Motor neuron (in vitro differentiated cells): ENCODE measurements at regions of chr1 and their contacts with region 1.

Region 1: DNA sequence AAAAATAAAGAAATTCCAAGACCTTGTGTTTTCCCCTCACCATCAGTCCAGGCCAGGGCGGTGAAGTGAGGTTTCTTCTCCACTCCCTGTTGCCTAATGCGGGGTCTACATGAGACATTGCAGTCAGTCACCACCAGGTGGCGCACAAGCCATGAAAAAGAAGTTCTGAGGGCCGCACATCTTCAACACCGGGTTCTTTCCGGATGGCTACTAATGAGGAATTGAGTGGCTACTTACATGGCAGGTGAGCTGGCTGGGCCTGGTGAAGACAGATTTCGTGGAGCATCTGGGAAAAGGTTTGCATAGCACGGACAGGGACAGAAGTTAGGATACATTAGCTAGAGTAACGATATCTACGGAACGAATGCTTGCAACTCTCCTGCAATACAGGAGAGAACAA is 15.8 kb upstream of the S100A11 start:
- ATAC-seq: peak in 3 of 8 experiments; percentile 2 to 11 (median 2)
- H3K4me3 ChIP-seq: no peak overlapping the region
- H3K27ac ChIP-seq: no peak overlapping the region
- H3K4me1 ChIP-seq: peaks cover 0 to 10% of the 10 kb centered on the region in 2 donors

Region 2: DNA sequence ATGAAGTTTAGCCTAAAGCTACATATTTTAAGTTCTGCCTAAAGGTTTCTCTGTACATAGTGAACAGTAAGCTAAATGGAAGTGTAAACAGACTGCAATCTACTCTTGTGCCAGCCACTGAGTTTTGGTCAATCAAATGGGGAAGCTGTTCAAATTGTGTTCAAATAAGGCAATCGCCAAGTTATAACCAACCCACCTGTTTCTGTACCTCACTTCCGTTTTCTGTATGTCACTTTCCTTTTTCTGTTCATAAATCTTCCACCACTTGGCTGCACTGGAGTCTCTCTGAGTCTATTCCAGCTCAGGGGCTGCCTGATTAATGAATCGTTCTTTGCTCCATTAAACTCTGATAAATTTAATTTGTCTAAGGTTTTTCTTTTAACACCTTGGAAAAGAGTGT is 132.5 kb before region 1 on chr1:
- in situ Hi-C with region 1: no loop called
- ATAC-seq: no peak
- H3K4me3 ChIP-seq: no peak overlapping the region
- H3K27ac ChIP-seq: no peak overlapping the region
- H3K4me1 ChIP-seq: no peaks in the 10 kb centered on the region

Region 3: GRCh38 chr1:152459596-152460528 is 407.3 kb after region 1 on chr1:
- in situ Hi-C with region 1: loop called in 3 of 9 experiments (anchors 10 to 25 kb)
- ATAC-seq: peak in 3 of 8 experiments; percentile 58 to 70 (median 64)
- H3K4me3 ChIP-seq: no peak overlapping the region
- H3K27ac ChIP-seq: no peak overlapping the region
- H3K4me1 ChIP-seq: no peaks in the 10 kb centered on the region